A673 (cell line): ENCODE measurements at regions of chr20 and their contacts with region 1.

Region 1: DNA sequence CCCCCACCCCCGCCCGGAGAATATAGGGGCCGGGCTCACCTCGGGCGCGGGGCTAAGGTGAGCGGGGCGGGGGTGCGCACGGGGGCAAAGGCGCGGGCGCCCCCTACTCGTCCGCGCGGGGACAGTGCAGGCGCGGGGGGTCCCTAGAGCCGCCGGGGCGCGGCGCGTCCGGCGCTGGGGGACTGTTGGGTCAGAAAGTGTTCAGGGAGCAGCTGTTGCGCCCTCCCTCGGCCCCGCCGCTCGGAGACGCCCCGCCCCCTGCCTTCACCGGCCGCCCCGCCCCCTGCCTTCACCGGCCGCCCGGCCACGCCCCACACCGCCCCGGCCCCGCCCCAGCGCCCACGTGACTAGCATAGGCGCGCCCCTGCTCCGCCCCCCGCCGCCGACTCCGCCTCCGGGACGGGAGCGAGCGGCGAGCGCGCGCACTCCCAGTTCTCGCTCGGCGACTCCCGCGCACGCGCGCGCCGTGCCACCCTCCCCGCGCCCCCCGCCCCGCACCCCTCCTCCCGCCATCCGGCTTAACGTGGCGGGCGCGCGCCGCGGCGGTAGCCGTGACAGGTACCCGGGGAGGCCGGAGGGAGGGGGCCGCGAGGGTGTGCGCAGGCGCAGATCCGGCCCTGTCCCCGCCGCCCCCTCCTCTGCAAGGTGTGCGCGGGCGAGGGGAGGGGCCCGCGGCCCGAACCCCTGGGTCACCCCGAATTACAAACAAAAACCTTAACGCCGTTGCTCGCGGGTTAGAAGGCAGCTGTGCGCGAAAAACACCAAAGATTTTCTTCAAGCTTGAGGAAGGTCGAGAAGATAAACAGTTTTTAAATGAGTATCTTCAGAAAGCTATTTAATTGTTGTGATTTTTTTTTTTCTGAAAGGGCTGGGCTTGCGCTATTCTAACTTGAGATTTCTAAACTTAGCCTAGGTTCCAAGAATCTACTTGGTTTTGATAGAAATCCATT is 704 bp upstream of the ZNF217 start:
- DNase-seq: peak; percentile 93
- H3K4me3 ChIP-seq: peak overlapping the region; percentile 79
- H3K27ac ChIP-seq: peak overlapping the region; percentile 86
- H3K4me1 ChIP-seq: peaks cover 47% of the 10 kb centered on the region
- H3K27me3 ChIP-seq: no peaks in the 10 kb centered on the region
- CTCF ChIP-seq: no peak

Region 2: DNA sequence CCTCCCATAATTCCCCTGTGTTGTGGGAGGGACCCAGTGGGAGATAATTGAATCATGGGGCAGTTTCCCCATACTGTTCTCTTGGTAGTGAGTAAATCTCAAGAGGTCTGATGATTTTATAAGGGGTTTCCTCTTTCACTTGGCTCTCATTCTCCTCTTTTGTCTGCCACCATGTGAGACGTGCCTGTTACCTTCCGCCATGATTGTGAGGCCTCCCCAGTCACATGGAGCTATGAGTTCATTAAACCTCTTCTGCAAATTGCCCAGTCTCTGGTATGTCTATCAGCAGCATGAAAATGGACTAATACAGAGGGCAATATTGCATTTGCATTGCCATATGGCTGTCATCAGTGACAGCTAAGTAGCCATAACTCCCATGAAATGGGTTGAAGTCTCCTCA is 63.9 kb before region 1 on chr20:
- CTCF ChIA-PET with region 1: no interaction called
- POLR2A ChIA-PET with region 1: no interaction called
- intact Hi-C with region 1: no loop called
- DNase-seq: no peak
- H3K4me3 ChIP-seq: no peak overlapping the region
- H3K27ac ChIP-seq: no peak overlapping the region
- H3K4me1 ChIP-seq: no peaks in the 10 kb centered on the region
- H3K27me3 ChIP-seq: no peaks in the 10 kb centered on the region
- CTCF ChIP-seq: no peak

Region 3: DNA sequence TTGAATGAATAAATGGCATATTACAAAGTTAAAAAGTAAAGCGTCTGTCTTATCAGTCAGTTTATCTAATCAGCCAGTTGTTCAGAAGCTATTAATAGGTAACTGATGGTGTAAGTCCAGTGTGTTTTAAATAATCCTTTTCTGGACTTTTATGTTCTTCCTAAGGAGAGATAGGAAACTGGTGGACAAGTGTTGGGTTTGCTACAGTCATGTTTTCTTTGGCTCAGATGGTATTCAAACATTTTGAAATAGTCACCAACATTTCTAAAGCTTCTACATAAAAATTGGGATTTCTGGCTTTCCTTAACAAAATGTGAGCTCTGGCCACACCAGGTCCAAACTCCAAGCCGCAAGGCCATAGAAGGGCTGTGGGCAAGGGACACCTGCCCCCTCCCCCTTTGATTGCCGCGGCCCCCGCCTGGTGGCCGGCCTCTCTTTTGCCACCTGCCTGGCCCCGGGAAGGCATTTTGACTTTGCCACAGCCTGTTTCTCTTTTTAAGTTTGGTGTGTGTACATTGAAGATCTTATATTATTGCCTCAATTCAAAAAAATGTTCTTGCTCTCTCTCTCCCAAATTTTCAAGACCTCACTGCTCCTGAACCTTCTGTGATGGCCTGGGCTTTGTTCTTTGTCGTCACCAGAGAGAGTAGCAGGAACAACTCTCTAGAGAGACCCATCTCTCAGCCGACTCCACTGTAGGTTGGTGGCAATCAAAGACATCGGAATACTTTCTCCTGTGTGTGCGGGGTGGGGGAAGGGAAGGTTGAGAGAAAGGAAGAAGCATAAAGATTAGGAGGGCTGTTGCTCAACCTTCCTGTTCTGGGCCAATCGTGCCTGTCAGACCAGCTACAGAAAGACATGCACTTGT is 83.3 kb after region 1 on chr20:
- CTCF ChIA-PET with region 1: no interaction called
- POLR2A ChIA-PET with region 1: no interaction called
- intact Hi-C with region 1: loop called (anchors 5 kb)
- DNase-seq: peak; percentile 92
- H3K4me3 ChIP-seq: peak overlapping the region; percentile 24
- H3K27ac ChIP-seq: peak overlapping the region; percentile 60
- H3K4me1 ChIP-seq: peaks cover 35% of the 10 kb centered on the region
- H3K27me3 ChIP-seq: no peaks in the 10 kb centered on the region
- CTCF ChIP-seq: no peak

Region 4: DNA sequence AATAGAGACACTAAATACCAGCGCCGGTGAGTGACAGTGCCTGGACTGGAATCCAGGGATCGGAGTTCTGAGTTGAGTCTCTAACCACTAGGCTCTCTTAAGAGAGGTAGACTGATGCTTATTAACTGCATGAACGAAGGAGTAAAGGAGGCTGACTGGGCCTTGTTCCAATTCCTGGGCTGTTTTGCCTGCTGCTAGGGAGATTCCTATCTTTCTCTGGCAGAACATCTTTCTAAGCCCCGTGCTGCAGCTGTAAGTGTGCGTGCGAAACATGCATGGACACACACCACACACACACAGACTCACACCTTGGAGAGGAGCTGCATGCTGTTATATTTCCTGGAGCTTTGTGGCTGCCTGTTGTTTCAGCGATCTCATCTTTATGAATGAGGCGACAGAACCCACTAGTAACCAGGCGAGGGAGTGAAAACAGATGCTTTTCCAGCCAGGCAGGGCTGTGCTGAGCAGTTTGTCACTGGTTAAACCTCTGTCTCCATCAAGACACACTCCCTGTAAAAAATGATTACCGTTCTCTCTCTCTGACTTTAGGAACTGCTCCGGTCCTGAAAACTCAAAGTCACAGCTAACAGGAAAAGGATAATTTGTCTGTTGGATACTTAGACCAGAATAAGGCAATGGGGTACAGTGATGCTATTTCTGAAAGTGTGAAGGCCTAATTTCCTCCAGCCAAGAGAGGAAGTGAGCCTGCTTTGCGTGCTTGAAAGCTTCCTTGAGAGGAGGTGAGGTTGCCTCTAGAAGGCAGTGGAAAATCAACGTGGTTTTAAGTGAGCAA is 156.7 kb after region 1 on chr20:
- CTCF ChIA-PET with region 1: no interaction called
- POLR2A ChIA-PET with region 1: no interaction called
- intact Hi-C with region 1: loop called (anchors 10 kb)
- DNase-seq: peak; percentile 81
- H3K4me3 ChIP-seq: no peak overlapping the region
- H3K27ac ChIP-seq: peak overlapping the region; percentile 75
- H3K4me1 ChIP-seq: peaks cover 59% of the 10 kb centered on the region
- H3K27me3 ChIP-seq: no peaks in the 10 kb centered on the region
- CTCF ChIP-seq: no peak

Region 5: DNA sequence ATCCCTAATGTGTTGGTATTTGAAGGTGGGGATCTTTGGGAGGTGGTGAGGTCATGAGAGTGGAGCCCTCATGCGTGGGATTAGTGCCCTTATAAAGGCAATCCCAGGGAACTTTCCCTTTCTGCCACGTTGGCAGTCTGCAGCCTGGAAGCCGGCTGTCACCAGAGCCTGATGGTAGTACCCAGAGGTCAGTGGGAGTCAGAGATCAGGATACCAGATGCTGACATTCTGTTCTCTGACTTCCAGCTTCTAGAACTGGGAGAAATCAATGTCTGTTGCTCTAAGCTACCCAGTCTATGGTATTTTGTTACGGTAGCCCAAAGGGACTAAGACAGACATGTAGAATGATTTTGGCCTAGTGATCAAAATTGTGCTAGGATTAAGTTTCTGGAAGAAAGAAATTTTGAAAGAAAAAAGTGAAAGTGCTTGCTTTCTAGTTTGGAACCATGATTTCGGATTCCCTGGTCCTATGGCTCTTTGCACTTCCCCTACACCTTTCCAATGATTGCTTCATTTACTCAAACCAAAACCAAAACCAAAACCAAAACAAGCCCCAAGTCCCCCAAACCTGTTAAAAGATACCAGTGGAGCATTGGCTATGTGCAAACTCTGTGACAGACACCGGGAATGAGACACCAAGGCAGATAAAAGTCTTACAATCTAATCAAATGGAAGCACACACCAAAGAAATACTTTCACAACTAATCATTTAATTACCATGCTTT is 173.0 kb after region 1 on chr20:
- CTCF ChIA-PET with region 1: no interaction called
- POLR2A ChIA-PET with region 1: no interaction called
- intact Hi-C with region 1: no loop called
- DNase-seq: no peak
- H3K4me3 ChIP-seq: no peak overlapping the region
- H3K27ac ChIP-seq: no peak overlapping the region
- H3K4me1 ChIP-seq: peaks cover 23% of the 10 kb centered on the region
- H3K27me3 ChIP-seq: no peaks in the 10 kb centered on the region
- CTCF ChIP-seq: no peak